ENCODE measurements at regions of chr1 and their contacts with region 1.

Region 1: GRCh38 chr1:212981571-212982328 is 31.4 kb downstream of the VASH2 start:
- DNase-seq: peak; percentile 93
- ATAC-seq: peak; percentile 47
- H3K4me3 ChIP-seq: no peak overlapping the region
- H3K27ac ChIP-seq: peak overlapping the region; percentile 93
- H3K4me1 ChIP-seq: peaks cover 56% of the 10 kb centered on the region
- H3K27me3 ChIP-seq: no peaks in the 10 kb centered on the region
- CTCF ChIP-seq: no peak
- EP300 ChIP-seq: no peak; a peak in 1 of 4 replicates
- POLR2A ChIP-seq: peak; percentile 65
- RAD21 ChIP-seq: no peak

Region 2: DNA sequence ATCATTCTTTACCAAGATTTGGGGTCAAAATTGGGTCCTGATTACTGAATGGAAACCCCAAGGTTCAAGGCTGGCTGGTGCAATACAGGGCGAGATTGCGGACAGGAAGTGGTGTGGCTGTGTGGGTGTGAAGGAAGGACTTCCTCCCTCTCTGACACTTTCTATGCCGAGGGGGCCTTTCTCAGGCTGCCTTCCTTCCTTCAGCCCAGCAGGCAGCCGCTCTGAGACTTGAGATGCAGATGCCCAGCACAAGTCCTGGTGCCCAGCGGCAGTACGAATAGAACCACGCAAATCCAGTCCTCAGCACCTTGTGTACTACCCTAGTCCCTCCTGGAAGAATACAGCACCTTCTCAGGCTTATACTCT is 298.4 kb before region 1 on chr1:
- CTCF ChIA-PET with region 1: no interaction called
- POLR2A ChIA-PET with region 1: no interaction called
- RAD21 ChIA-PET with region 1: no interaction called
- SMC1A ChIA-PET with region 1: interaction called, 3 read pairs
- in situ Hi-C with region 1: no loop called
- intact Hi-C with region 1: loop called (anchors 5 kb)
- DNase-seq: peak; percentile 81
- ATAC-seq: peak; percentile 79
- H3K4me3 ChIP-seq: peak overlapping the region; percentile 33; the same call in 1 of the 2 replicates
- H3K27ac ChIP-seq: peak overlapping the region; percentile 90
- H3K4me1 ChIP-seq: peaks cover 62% of the 10 kb centered on the region
- H3K27me3 ChIP-seq: no peaks in the 10 kb centered on the region
- CTCF ChIP-seq: no peak
- EP300 ChIP-seq: peak in 1 of 2 experiments; percentile 52; a peak in 1 of 4 replicates
- POLR2A ChIP-seq: peak; percentile 80
- RAD21 ChIP-seq: no peak

Region 3: DNA sequence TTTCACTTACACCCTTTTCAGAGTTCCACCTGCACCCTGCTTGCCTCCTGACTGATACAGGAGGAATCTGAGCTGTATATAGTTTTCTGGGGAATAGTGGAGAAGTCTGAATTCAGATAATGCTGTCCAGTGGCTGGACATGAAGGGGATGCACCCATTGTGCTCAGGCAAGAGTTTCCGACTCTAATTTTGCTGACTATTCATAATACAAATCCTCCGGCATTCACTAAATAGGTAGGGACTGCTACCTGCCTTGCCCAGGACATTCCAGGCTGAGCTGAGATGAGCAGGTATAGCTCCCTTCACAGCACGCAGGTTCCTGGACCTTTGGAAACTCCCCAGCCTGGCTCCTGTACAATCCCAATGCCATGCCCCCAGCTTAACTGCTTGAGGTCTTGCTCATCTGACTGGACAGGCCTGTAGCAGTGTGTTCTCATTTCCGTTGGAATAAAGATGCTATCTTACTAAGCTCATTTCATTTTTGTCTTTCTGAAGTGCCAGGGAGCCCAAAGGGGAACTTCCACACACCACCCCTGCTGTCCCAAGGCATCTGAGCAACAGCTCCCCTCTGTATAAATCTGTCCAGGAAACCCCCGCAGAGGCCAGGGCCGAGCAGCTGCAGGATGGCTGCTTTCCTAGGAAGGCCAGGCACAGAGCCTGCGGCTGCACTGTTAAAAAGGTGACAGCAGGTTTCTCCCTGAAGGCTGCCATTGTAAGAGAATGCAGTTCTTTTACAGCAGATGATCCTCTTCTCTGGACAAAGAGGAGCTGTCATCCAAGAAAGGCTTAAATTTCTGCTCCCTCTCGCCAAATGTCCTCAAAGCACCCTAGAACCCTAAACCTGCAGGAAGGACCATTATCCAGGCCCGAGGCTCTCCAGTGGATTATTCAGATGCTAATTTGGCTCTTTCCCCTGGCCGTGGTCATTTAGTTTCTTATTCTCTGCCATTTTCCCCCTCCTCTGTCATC is 53.1 kb before region 1 on chr1:
- CTCF ChIA-PET with region 1: interaction called, 4 read pairs
- POLR2A ChIA-PET with region 1: interaction called, 5 read pairs
- RAD21 ChIA-PET with region 1: interaction called, 16 read pairs
- SMC1A ChIA-PET with region 1: interaction called, 12 read pairs
- in situ Hi-C with region 1: no loop called
- intact Hi-C with region 1: no loop called
- DNase-seq: peak; percentile 65
- ATAC-seq: peak; percentile 87
- H3K4me3 ChIP-seq: no peak overlapping the region
- H3K27ac ChIP-seq: peak overlapping the region; percentile 79
- H3K4me1 ChIP-seq: peaks cover 18% of the 10 kb centered on the region
- H3K27me3 ChIP-seq: no peaks in the 10 kb centered on the region
- CTCF ChIP-seq: no peak
- EP300 ChIP-seq: no peak
- POLR2A ChIP-seq: no peak
- RAD21 ChIP-seq: no peak

Region 4: GRCh38 chr1:212959266-212960220 is 22.2 kb before region 1 on chr1:
- CTCF ChIA-PET with region 1: interaction called, 61 read pairs
- POLR2A ChIA-PET with region 1: interaction called, 71 read pairs
- RAD21 ChIA-PET with region 1: interaction called, 73 read pairs
- SMC1A ChIA-PET with region 1: interaction called, 86 read pairs
- in situ Hi-C with region 1: no loop called
- intact Hi-C with region 1: loop called (anchors 2 kb)
- DNase-seq: peak; percentile 79
- ATAC-seq: peak; percentile 77
- H3K4me3 ChIP-seq: peak overlapping the region; percentile 37; the same call in 1 of the 2 replicates
- H3K27ac ChIP-seq: peak overlapping the region; percentile 91
- H3K4me1 ChIP-seq: peaks cover 75% of the 10 kb centered on the region
- H3K27me3 ChIP-seq: no peaks in the 10 kb centered on the region
- CTCF ChIP-seq: no peak
- EP300 ChIP-seq: no peak
- POLR2A ChIP-seq: no peak
- RAD21 ChIP-seq: no peak

Region 5: GRCh38 chr1:213008564-213008963 is 26.8 kb after region 1 on chr1:
- CTCF ChIA-PET with region 1: no interaction called
- POLR2A ChIA-PET with region 1: interaction called, 4 read pairs
- RAD21 ChIA-PET with region 1: no interaction called
- SMC1A ChIA-PET with region 1: interaction called, 3 read pairs
- in situ Hi-C with region 1: no loop called
- intact Hi-C with region 1: loop called (anchors 1 kb)
- DNase-seq: peak; percentile 17
- ATAC-seq: peak; percentile 92
- H3K4me3 ChIP-seq: no peak overlapping the region
- H3K27ac ChIP-seq: no peak overlapping the region
- H3K4me1 ChIP-seq: peaks cover 7% of the 10 kb centered on the region
- H3K27me3 ChIP-seq: no peaks in the 10 kb centered on the region
- CTCF ChIP-seq: no peak
- EP300 ChIP-seq: no peak
- POLR2A ChIP-seq: no peak
- RAD21 ChIP-seq: no peak

Measured in GM12878 (cell line).